ENCODE measurements at regions of chr3 and their contacts with region 1.

Region 1: GRCh38 chr3:4633078-4634004 is 140.2 kb downstream of the ITPR1 start:
- DNase-seq: peak; percentile 20
- H3K4me3 ChIP-seq: no peak overlapping the region
- H3K27ac ChIP-seq: no peak overlapping the region
- H3K27me3 ChIP-seq: peaks cover 2% of the 10 kb centered on the region
- CTCF ChIP-seq: peak; percentile 93

Region 2: GRCh38 chr3:4309491-4310128 is 323.7 kb before region 1 on chr3:
- CTCF ChIA-PET with region 1: interaction called, 16 read pairs
- POLR2A ChIA-PET with region 1: no interaction called
- DNase-seq: no peak
- H3K4me3 ChIP-seq: no peak overlapping the region
- H3K27ac ChIP-seq: no peak overlapping the region
- H3K27me3 ChIP-seq: no peaks in the 10 kb centered on the region
- CTCF ChIP-seq: no peak

Region 3: GRCh38 chr3:4350789-4351163 is 282.6 kb before region 1 on chr3:
- CTCF ChIA-PET with region 1: interaction called, 336 read pairs
- POLR2A ChIA-PET with region 1: no interaction called
- DNase-seq: peak; percentile 47
- H3K4me3 ChIP-seq: no peak overlapping the region
- H3K27ac ChIP-seq: no peak overlapping the region
- H3K27me3 ChIP-seq: no peaks in the 10 kb centered on the region
- CTCF ChIP-seq: peak; percentile 81

Region 4: GRCh38 chr3:4466741-4467521 is 166.4 kb before region 1 on chr3 and contains the start of gene SUMF1:
- CTCF ChIA-PET with region 1: interaction called, 13 read pairs
- POLR2A ChIA-PET with region 1: no interaction called
- DNase-seq: peak; percentile 47
- H3K4me3 ChIP-seq: peak within 1 kb of the TSS; percentile 82
- H3K27ac ChIP-seq: peak within 1 kb of the TSS; percentile 54
- H3K27me3 ChIP-seq: peaks cover 6% of the 10 kb centered on the region
- CTCF ChIP-seq: no peak
- polyA plus RNA-seq, gene SUMF1: 46.5 and 51.4 TPM in 2 replicates

Region 5: GRCh38 chr3:4552811-4553210 is 80.5 kb before region 1 on chr3:
- CTCF ChIA-PET with region 1: interaction called, 10 read pairs
- POLR2A ChIA-PET with region 1: no interaction called
- DNase-seq: no peak
- H3K4me3 ChIP-seq: no peak overlapping the region
- H3K27ac ChIP-seq: no peak overlapping the region
- H3K27me3 ChIP-seq: peaks cover 2% of the 10 kb centered on the region
- CTCF ChIP-seq: no peak

Region 6: DNA sequence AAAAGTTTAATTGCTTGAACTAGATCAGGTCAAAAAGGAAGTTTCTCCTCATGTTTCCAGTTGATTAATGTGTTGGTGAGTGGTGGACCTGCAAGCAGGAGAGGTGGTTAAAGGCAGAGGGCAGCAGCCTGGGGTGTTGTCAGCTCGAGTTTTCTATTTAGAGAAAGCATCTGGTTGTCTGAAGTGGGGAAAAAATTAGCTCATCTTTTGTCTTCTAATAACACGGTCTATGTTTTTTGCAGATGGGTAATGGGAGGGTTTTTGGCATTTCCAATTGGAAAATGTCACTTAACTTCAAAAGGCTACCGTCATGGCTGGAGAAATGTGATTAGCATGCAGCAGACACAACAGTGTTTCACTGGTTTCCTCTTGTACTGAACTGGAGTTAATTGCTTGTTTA is 17.6 kb before region 1 on chr3:
- CTCF ChIA-PET with region 1: interaction called, 15 read pairs
- POLR2A ChIA-PET with region 1: no interaction called
- DNase-seq: no peak
- H3K4me3 ChIP-seq: no peak overlapping the region
- H3K27ac ChIP-seq: no peak overlapping the region
- H3K27me3 ChIP-seq: peaks cover 3% of the 10 kb centered on the region
- CTCF ChIP-seq: no peak

Region 7: DNA sequence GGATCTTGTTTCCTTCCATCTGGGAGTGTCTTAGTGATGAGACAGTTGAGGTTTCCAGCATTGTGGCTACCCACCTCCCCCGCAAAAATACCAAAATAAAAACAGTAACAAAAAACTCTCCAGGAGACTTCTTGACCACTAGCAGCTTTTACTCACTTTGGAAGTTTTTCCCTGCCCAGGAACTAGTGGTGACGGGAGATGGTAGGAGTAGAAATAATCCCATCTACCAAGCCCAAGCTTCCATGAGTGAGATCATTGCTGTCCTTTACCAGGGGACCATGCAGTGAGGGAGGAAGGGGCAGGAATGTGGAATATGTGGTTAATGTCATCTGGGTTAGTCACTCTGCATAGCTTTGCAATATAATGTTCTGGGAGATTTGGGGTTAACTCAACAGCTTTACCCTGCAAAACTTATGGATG is 47.5 kb after region 1 on chr3:
- CTCF ChIA-PET with region 1: no interaction called
- POLR2A ChIA-PET with region 1: no interaction called
- DNase-seq: no peak
- H3K4me3 ChIP-seq: no peak overlapping the region
- H3K27ac ChIP-seq: no peak overlapping the region
- H3K27me3 ChIP-seq: no peaks in the 10 kb centered on the region
- CTCF ChIP-seq: no peak

Region 8: GRCh38 chr3:4866841-4867240 is 233.5 kb after region 1 on chr3:
- CTCF ChIA-PET with region 1: no interaction called
- POLR2A ChIA-PET with region 1: no interaction called
- DNase-seq: no peak
- H3K4me3 ChIP-seq: no peak overlapping the region
- H3K27ac ChIP-seq: no peak overlapping the region
- H3K27me3 ChIP-seq: no peaks in the 10 kb centered on the region
- CTCF ChIP-seq: no peak

Region 9: GRCh38 chr3:5572168-5572567 is 938.8 kb after region 1 on chr3:
- CTCF ChIA-PET with region 1: no interaction called
- POLR2A ChIA-PET with region 1: no interaction called
- DNase-seq: no peak
- H3K4me3 ChIP-seq: no peak overlapping the region
- H3K27ac ChIP-seq: no peak overlapping the region
- H3K27me3 ChIP-seq: no peaks in the 10 kb centered on the region
- CTCF ChIP-seq: no peak